Endothelial cell of umbilical vein (primary cell): ENCODE measurements at regions of chr5 and their contacts with region 1.

Region 1: GRCh38 chr5:127030259-127031146 is at the start of gene MARCHF3:
- DNase-seq: peak; percentile 98
- H3K4me3 ChIP-seq: peak within 1 kb of the TSS; percentile 83 to 93 (median 88)
- H3K27ac ChIP-seq: peak within 1 kb of the TSS; percentile 78
- H3K4me1 ChIP-seq: peaks cover 11% of the 10 kb centered on the region
- H3K27me3 ChIP-seq: no peaks in the 10 kb centered on the region
- CTCF ChIP-seq: peak in 1 of 2 donors; percentile 25
- POLR2A ChIP-seq: peak; percentile 94
- total RNA-seq, gene MARCHF3: 31.7 and 31.9 TPM in 2 replicates

Region 2: GRCh38 chr5:126917918-126918614 is 112.4 kb before region 1 on chr5:
- CTCF ChIA-PET with region 1: no interaction called
- POLR2A ChIA-PET with region 1: no interaction called
- dilution Hi-C with region 1: no loop called
- intact Hi-C with region 1: loop called (anchors 1 kb)
- DNase-seq: peak; percentile 16
- H3K4me3 ChIP-seq: no peak overlapping the region
- H3K27ac ChIP-seq: peak overlapping the region; percentile 5
- H3K4me1 ChIP-seq: peaks cover 21% of the 10 kb centered on the region
- H3K27me3 ChIP-seq: no peaks in the 10 kb centered on the region
- CTCF ChIP-seq: no peak
- POLR2A ChIP-seq: no peak

Region 3: DNA sequence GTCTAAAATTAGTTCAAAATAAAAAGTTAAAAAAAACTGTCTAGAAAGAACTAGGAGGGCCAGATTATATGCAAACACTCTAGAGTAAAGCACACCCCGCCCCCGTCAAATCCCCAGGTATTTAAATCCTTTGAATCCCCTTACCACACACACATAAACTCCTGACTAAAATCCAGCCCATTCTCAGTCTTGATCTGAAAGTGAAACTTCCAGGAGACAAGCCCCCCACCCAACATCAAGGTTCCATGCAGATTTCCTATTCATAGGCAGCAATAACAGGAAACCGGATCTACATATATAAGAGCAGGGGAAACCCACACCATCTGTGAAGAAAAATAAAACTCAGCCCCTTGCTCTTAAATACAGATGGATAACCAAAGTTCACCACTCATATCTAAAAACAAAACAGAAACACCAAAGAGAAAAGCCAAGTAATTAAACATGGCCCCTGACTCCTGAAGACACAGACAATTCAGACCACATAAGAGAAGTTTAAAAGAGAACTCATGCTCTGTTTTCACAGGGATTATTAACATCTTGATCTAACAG is 42.4 kb before region 1 on chr5:
- CTCF ChIA-PET with region 1: no interaction called
- POLR2A ChIA-PET with region 1: no interaction called
- dilution Hi-C with region 1: no loop called
- intact Hi-C with region 1: loop called (anchors 1 kb)
- DNase-seq: peak; percentile 91
- H3K4me3 ChIP-seq: peak overlapping the region in 1 of 3 experiments; percentile 44
- H3K27ac ChIP-seq: peak overlapping the region; percentile 56
- H3K4me1 ChIP-seq: peaks cover 16% of the 10 kb centered on the region
- H3K27me3 ChIP-seq: no peaks in the 10 kb centered on the region
- CTCF ChIP-seq: no peak
- POLR2A ChIP-seq: no peak

Region 4: GRCh38 chr5:127072861-127073846 is 42.7 kb after region 1 on chr5 and contains the start of gene C5orf63:
- CTCF ChIA-PET with region 1: interaction called, 3 read pairs
- POLR2A ChIA-PET with region 1: no interaction called
- dilution Hi-C with region 1: no loop called
- intact Hi-C with region 1: loop called (anchors 1 kb)
- DNase-seq: peak; percentile 45
- H3K4me3 ChIP-seq: peak within 1 kb of the TSS; percentile 32 to 69 (median 56)
- H3K27ac ChIP-seq: peak within 1 kb of the TSS; percentile 72
- H3K4me1 ChIP-seq: peaks cover 61% of the 10 kb centered on the region
- H3K27me3 ChIP-seq: no peaks in the 10 kb centered on the region
- CTCF ChIP-seq: no peak
- POLR2A ChIP-seq: peak; percentile 41
- total RNA-seq, gene C5orf63: 4.0 and 5.3 TPM in 2 replicates

Region 5: GRCh38 chr5:127290019-127290945 is 259.8 kb after region 1 on chr5 and contains the start of gene MEGF10:
- CTCF ChIA-PET with region 1: no interaction called
- POLR2A ChIA-PET with region 1: no interaction called
- dilution Hi-C with region 1: no loop called
- intact Hi-C with region 1: loop called (anchors 2 kb)
- DNase-seq: peak; percentile 33
- H3K4me3 ChIP-seq: peak within 1 kb of the TSS; percentile 8 to 46 (median 28)
- H3K27ac ChIP-seq: no peak within 1 kb of the TSS
- H3K4me1 ChIP-seq: peaks cover 17% of the 10 kb centered on the region
- H3K27me3 ChIP-seq: peaks cover 26 to 47% of the 10 kb centered on the region in 2 experiments
- CTCF ChIP-seq: peak; percentile 66 to 71
- POLR2A ChIP-seq: no peak
- total RNA-seq, gene MEGF10: 0.21 and 1.00 TPM in 2 replicates